ENCODE measurements at regions of chr9 and their contacts with region 1.

Region 1: DNA sequence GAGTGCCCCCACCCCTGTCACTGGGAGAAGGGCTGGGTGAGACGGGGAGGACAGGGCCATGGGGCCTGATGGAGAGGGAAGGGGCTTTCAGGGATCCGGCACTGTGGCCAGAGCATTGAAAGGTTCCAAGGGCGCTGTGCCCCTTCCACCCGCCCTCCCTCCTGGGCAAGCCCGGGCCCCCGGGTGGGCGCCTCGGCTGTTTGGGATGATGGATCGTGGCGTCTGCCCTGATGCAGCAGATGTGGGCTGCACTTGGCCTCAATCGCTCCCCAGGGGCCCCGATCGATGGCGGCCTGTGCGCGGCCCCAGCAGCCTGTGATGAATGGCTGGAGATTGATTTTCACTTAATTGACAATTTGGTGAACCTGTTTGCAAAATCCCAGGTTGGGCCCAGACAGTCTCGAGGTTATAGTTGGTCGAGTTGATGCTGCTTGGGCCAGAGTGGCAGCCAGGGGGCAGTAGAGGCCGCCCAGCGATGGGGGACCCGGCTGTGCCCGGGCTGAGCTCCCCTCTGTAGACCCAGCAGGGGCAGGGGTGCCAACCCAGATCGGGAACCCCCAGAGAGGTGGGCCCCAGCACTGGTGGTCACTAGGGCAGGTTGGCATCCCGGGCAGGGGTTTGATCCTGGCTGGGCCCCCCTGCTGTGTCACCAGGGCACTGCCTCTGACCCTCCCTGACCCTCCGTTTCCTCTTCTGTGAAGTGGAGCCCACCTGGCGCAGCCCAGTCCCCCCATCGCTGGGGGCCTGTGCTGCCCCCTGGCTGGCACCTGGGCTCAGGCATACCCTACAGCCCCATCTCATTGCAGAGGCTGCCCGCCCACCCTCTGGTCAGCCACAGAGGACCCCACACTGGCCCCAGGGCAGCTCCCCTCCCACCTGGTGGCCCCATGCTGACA is 34.7 kb downstream of the LHX3 start:
- DNase-seq: peak; percentile 72
- H3K4me3 Mint-ChIP-seq: no peak overlapping the region
- H3K27ac Mint-ChIP-seq: no peak overlapping the region
- H3K4me1 Mint-ChIP-seq: no peaks in the 10 kb centered on the region
- H3K27me3 Mint-ChIP-seq: peaks cover 10% of the 10 kb centered on the region

Region 2: DNA sequence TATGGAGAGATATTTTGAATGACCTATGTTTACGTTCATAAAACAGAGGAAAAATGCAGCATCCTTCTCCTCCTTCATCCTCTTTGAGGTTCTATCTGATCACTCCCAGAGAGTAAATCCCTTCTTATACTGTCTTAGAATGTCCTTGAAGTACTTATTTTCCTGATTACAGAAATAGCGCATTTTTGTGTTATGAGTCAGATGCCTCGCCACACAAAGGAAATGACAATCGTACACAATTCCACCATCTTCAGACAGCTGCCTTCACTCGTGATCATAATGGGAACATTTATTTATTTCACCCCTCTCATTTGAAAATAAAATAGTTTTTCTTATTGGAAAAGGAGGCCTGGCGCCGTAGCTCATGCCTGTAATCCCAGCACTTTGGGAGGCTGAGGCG is 528.5 kb before region 1 on chr9:
- CTCF ChIA-PET with region 1: no interaction called
- intact Hi-C with region 1: no loop called
- DNase-seq: no peak
- H3K4me3 Mint-ChIP-seq: no peak overlapping the region
- H3K27ac Mint-ChIP-seq: no peak overlapping the region
- H3K4me1 Mint-ChIP-seq: no peaks in the 10 kb centered on the region
- H3K27me3 Mint-ChIP-seq: peaks cover 31% of the 10 kb centered on the region

Region 3: GRCh38 chr9:136225748-136226679 is 55.8 kb after region 1 on chr9:
- CTCF ChIA-PET with region 1: no interaction called
- intact Hi-C with region 1: loop called (anchors 5 kb)
- DNase-seq: peak; percentile 76
- H3K4me3 Mint-ChIP-seq: no peak overlapping the region
- H3K27ac Mint-ChIP-seq: no peak overlapping the region
- H3K4me1 Mint-ChIP-seq: peaks cover 10% of the 10 kb centered on the region
- H3K27me3 Mint-ChIP-seq: no peaks in the 10 kb centered on the region

Region 4: DNA sequence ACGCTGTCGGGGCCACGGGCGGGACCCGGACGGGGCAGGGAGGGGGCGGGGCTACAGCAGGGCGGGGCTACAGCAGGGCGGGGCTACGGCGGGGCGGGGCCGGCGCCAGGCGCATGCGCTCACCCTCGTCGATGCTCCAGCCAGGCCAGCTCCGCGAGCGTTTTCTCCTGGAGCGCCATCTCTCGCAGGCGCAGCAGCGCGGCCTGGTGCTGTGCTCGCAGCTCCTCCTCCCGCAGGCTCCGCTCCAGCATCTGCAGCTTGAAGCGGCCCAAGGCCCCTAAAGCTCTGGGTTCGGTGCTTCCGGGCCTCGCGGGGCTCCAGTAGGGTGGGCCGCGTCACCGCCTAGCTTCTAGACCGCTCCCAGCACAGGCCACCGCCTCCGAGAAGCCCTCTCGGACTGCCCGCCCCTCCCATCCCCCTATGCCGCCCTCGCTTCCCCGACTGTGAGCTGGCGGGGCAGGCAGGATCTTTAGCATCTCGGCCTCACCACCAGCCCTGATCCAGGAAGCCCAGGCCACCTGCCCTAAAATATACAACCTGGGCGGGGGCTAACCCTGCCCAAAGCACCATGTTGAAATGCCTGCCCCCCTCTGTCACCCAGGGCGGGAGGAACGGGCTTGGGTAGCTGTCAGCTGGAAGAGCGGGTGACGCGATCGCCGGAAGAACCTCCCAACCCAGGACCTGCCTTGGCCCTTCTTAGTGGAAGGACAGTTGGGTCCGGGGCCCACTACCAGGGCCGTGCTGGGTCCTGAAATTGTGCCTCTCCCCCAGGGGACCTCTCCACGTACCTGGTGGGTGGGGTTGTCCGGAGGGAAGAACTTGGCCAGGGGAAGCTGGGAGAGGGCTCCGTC is 97.2 kb after region 1 on chr9:
- CTCF ChIA-PET with region 1: interaction called, 3 read pairs
- intact Hi-C with region 1: loop called (anchors 1 kb)
- DNase-seq: peak; percentile 85
- H3K4me3 Mint-ChIP-seq: peak overlapping the region; percentile 66
- H3K27ac Mint-ChIP-seq: peak overlapping the region; percentile 41
- H3K4me1 Mint-ChIP-seq: peaks cover 4% of the 10 kb centered on the region
- H3K27me3 Mint-ChIP-seq: peaks cover 2% of the 10 kb centered on the region

Region 5: DNA sequence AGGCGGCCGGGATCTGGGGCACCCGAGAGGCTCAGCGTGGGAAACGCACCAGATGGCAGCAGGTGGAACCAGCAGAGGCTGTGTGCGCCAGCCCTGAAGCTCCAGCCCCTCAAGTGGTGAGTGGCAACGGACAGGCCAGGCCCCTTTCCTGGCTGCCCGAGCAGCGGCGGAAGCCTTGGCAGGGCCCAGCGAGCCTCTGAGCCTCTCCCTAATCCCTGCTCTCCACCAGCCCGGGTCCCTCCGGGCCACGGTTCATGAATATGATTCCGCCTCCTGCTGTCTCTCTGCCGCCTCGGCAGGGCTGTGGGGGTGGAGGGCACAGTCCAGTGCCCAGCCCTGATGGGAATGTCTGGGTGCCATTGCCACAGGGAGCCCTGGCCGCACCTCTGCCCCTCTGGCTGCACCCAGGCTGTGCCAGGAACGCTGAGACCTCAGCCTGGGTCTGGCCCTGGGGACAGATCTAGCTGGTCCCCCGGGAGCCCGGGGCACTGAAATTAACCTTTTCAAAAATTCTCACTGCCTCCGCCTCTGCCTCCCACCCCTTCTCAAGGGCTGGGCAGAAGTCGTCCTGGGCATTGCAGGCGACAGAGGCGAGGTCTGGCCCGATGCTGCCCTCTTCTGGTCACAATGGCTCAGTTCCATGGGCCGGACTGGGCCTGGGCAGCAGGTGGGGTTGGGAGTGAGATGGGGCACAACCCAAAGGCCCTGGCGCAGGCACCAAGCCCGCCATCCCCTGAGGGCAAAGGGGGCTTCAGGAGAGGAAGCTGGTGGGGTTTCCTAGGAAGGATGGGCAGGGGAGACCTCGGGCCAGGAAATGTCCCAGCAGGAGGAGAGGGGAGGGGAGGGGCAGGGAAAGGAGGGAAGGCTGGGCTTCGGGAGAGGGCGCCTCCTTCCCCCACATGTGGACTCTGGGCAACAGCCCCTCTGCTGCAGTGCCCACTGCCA is 113.3 kb after region 1 on chr9:
- CTCF ChIA-PET with region 1: interaction called, 3 read pairs
- intact Hi-C with region 1: loop called (anchors 1 kb)
- DNase-seq: peak; percentile 82
- H3K4me3 Mint-ChIP-seq: no peak overlapping the region
- H3K27ac Mint-ChIP-seq: no peak overlapping the region
- H3K4me1 Mint-ChIP-seq: peaks cover 6% of the 10 kb centered on the region
- H3K27me3 Mint-ChIP-seq: peaks cover 3% of the 10 kb centered on the region